ENCODE measurements at regions of chr9 and their contacts with region 1.

Region 1: DNA sequence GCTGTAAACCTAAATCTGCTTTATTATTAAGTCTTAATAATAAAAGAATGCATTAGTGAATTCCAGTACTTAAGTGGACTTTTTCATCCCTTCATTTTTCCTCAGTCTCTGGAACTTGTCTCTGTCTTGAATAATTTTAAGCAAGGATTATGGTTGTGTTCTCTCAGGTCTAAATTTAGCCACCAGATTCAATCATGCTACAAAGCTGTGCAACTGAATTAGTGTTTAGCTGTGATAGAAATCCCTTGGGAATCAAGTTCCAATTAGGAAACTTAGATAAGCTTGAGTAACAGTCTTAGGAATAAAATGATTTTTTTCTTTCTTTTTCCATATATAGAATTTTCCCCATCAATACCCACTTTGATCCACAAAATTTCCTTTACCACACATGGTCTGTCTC is 104.3 kb downstream of the PLPPR1 start:
- DNase-seq: no peak
- H3K4me3 ChIP-seq: no peak overlapping the region
- CTCF ChIP-seq: no peak

Region 2: DNA sequence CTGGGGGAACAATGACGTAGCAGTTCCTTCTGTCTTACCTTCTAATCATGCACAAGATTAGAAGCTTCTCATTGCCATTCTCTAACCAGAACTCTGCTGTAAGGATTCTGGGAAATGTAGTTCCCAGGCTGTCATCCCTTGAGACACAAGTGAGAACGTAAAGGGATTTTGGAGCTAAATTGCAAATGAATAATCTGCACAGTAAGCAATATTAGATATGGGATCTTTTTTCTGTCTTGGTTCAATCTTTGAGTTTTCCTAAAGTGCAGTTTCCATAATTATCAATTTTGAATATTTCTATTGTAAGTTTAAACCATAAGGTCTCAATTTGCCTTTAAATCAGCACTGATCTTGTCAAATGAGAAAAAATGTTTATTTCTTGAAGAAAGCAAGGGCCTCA is 293.9 kb before region 1 on chr9:
- CTCF ChIA-PET with region 1: no interaction called
- POLR2A ChIA-PET with region 1: no interaction called
- DNase-seq: no peak
- H3K4me3 ChIP-seq: no peak overlapping the region
- CTCF ChIP-seq: no peak

Region 3: GRCh38 chr9:101119206-101119819 is 13.5 kb before region 1 on chr9:
- CTCF ChIA-PET with region 1: interaction called, 13 read pairs
- POLR2A ChIA-PET with region 1: no interaction called
- DNase-seq: no peak
- H3K4me3 ChIP-seq: no peak overlapping the region
- CTCF ChIP-seq: peak; percentile 80

Measured in AG04449 (cell line).